Common myeloid progenitor, CD34-positive (primary cell): ENCODE measurements at regions of chr6 and their contacts with region 1.

Region 1: GRCh38 chr6:37177077-37177934 is 7.4 kb downstream of the PIM1 start:
- DNase-seq: peak; percentile 79 to 96 (median 95)
- H3K4me3 ChIP-seq: peak overlapping the region in 5 of 7 experiments; percentile 10 to 54 (median 29)
- H3K27ac ChIP-seq: peak overlapping the region in 1 of 2 experiments; percentile 93
- H3K4me1 ChIP-seq: peaks cover 44 to 92% (median 84%) of the 10 kb centered on the region in 4 experiments
- H3K27me3 ChIP-seq: no peaks in the 10 kb centered on the region

Region 2: DNA sequence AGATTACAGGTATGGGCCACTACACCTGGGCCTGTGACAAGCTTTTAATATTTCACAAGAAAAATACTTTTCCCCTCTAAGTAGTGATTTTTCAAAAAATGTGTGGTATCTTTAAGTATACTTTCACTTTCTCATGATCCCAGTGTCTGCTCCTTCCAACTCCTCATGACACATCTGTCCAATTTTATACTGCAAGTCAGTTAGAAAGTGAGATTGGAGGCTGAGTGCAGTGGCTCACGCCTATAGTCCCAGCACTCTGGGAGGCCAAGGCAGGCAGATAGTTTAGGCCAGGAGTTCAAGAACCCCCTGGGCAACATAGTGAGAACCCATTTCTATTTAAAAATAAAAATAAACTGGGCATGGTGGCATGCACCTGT is 12.8 kb after region 1 on chr6:
- CTCF ChIA-PET with region 1: interaction called, 89 read pairs
- POLR2A ChIA-PET with region 1: interaction called, 8 read pairs
- DNase-seq: peak in 2 of 3 donors; percentile 73 to 81
- H3K4me3 ChIP-seq: peak overlapping the region in 1 of 7 experiments; percentile 15
- H3K27ac ChIP-seq: peak overlapping the region; percentile 25 to 85
- H3K4me1 ChIP-seq: peaks cover 16 to 85% (median 60%) of the 10 kb centered on the region in 4 experiments
- H3K27me3 ChIP-seq: no peaks in the 10 kb centered on the region

Region 3: DNA sequence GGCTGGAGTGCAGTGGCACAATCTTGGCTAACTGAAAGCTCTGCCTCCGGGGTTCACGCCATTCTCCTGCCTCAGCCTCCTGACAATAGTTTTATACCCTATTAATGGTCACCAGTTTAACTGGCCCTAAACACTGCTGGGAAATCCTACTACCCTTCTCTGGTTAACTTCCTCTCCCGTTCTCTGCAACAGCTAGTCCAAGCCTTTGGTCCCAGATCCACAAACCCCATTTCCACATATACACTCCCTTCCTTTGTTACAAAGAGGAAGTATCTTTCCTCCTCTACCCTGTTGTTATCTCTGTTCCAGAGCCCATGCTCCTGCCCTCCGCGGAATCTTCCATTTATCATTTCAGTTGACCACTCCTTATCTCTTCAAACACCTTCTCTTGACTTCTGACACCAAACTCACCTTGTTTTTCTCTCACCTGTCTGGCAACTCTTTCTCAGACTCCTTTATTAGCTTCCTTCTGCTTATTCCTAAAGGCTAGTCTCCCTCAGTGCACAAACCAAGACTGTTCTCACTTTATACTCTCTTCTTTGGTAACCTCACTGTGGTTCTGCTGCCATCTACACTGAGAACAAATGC is 55.2 kb after region 1 on chr6:
- CTCF ChIA-PET with region 1: no interaction called
- POLR2A ChIA-PET with region 1: no interaction called
- DNase-seq: no peak
- H3K4me3 ChIP-seq: no peak overlapping the region
- H3K27ac ChIP-seq: peak overlapping the region in 1 of 2 experiments; percentile 55
- H3K4me1 ChIP-seq: no peaks in the 10 kb centered on the region
- H3K27me3 ChIP-seq: no peaks in the 10 kb centered on the region

Region 4: GRCh38 chr6:37483917-37484785 is 306.8 kb after region 1 on chr6:
- CTCF ChIA-PET with region 1: no interaction called
- POLR2A ChIA-PET with region 1: no interaction called
- DNase-seq: peak in 2 of 3 donors; percentile 60 to 72
- H3K4me3 ChIP-seq: no peak overlapping the region
- H3K27ac ChIP-seq: no peak overlapping the region
- H3K4me1 ChIP-seq: peaks cover 0 to 3% (median under 1%) of the 10 kb centered on the region in 4 experiments
- H3K27me3 ChIP-seq: no peaks in the 10 kb centered on the region